ENCODE measurements at regions of chr3 and their contacts with region 1.

Region 1: DNA sequence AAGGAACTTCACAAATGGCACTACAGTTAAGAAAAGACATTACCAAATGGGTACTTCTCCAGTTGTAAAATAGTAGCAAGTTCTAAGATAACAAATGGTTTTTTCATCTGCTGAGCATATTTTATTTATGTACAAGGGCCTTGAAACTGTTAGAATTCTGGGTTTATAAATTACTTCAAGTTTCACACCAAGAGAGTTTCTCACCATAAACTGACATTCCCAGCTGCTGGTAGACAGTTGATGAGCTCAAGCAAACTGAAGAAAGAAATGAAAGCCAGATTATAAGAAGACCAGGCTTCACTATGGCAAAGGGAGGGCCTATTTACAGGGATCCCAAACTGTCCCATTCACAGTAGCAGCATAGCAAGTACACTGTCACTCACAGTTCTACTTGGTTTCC is 99.8 kb downstream of the DHX30 start:
- DNase-seq: no peak
- H3K4me3 ChIP-seq: no peak overlapping the region
- H3K27ac ChIP-seq: no peak overlapping the region
- H3K4me1 ChIP-seq: no peaks in the 10 kb centered on the region
- H3K27me3 ChIP-seq: no peaks in the 10 kb centered on the region
- CTCF ChIP-seq: no peak

Region 2: GRCh38 chr3:47041104-47041503 is 861.6 kb before region 1 on chr3:
- CTCF ChIA-PET with region 1: no interaction called
- POLR2A ChIA-PET with region 1: interaction called, 32 read pairs
- intact Hi-C with region 1: no loop called
- DNase-seq: no peak
- H3K4me3 ChIP-seq: no peak overlapping the region
- H3K27ac ChIP-seq: no peak overlapping the region
- H3K4me1 ChIP-seq: no peaks in the 10 kb centered on the region
- H3K27me3 ChIP-seq: no peaks in the 10 kb centered on the region
- CTCF ChIP-seq: no peak

Region 3: DNA sequence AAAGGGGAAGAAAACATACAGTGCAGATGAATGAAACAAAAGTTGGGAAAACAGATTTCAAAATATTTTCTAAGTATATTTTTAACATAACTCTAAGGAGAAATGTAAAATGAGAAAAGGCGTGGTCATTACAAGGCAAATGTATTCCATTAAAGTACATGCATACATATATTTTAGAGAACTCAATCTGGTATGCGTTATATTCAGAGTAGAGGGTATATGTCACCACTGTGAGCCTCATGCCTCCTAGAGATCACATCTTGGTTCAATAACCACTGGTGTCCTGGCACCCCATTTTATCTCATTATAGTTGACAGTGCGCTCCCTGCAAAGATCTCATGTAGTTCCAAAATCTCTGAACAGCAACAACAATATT is 198.5 kb before region 1 on chr3:
- CTCF ChIA-PET with region 1: no interaction called
- POLR2A ChIA-PET with region 1: no interaction called
- intact Hi-C with region 1: no loop called
- DNase-seq: no peak
- H3K4me3 ChIP-seq: no peak overlapping the region
- H3K27ac ChIP-seq: no peak overlapping the region
- H3K4me1 ChIP-seq: 0 out of 2 replicates have a peak, but pooled peaks cover 4% of the 10 kb centered on the region
- H3K27me3 ChIP-seq: no peaks in the 10 kb centered on the region
- CTCF ChIP-seq: no peak